ENCODE measurements at regions of chr19 and their contacts with region 1.

Region 1: GRCh38 chr19:51607920-51608562 is 22.2 kb downstream of the SIGLEC5 start:
- DNase-seq: peak; percentile 71
- H3K4me3 ChIP-seq: no peak overlapping the region
- H3K27ac ChIP-seq: no peak overlapping the region
- H3K4me1 ChIP-seq: no peaks in the 10 kb centered on the region
- H3K27me3 ChIP-seq: no peaks in the 10 kb centered on the region
- CTCF ChIP-seq: peak; percentile 84 to 91

Region 2: DNA sequence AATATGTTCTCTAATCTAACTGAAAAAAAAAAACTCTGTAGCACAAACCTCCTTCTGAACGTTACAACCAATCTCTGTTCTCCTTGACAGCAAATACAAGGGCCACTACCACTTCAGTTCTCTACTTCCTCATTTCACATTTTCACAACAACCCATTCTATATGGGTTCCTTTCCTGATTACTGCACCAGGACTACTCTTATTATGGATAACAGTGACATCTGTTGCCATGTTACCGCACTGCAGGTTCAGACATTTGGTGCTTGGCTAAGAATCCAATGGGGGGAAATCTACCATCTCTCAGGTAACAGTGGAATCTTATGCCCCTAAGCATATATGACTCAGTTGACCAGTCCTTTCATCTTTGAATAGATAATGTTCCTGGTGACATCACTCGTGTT is 175.3 kb after region 1 on chr19:
- CTCF ChIA-PET with region 1: no interaction called
- dilution Hi-C with region 1: no loop called
- in situ Hi-C with region 1: no loop called
- intact Hi-C with region 1: loop called (anchors 1 kb)
- DNase-seq: peak; percentile 78
- H3K4me3 ChIP-seq: no peak overlapping the region
- H3K27ac ChIP-seq: no peak overlapping the region
- H3K4me1 ChIP-seq: peaks cover 12% of the 10 kb centered on the region
- H3K27me3 ChIP-seq: no peaks in the 10 kb centered on the region
- CTCF ChIP-seq: peak; percentile 44 to 60

Measured in mammary epithelial cell (primary cell).